GM10248 (cell line): ENCODE measurements at regions of chr4 and their contacts with region 1.

Region 1: DNA sequence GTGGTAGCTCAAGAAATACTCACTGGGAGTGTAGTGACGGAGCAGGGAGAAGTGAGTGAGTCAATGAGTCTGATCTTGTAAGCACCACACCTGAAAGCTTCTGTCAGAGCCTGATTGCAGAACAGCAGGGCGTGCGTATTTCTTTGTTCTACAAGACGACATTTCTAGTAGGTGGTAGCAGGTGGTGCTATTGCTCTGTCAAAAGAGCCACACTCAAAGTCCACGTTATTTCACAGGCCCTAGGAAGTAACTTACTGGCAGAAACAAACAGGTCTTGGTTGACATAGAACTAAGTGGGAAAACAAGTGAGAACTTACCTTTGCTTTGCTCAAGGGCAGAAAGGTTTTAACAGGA is 46.4 kb upstream of the SPRY1 start:
- DNase-seq: no peak
- CTCF ChIP-seq: no peak

Region 2: GRCh38 chr4:123319639-123320038 is 30.5 kb before region 1 on chr4:
- CTCF ChIA-PET with region 1: no interaction called
- POLR2A ChIA-PET with region 1: no interaction called
- DNase-seq: no peak
- CTCF ChIP-seq: no peak

Region 3: GRCh38 chr4:123361195-123361861 is 11.2 kb after region 1 on chr4:
- CTCF ChIA-PET with region 1: interaction called, 18 read pairs
- POLR2A ChIA-PET with region 1: no interaction called
- DNase-seq: no peak
- CTCF ChIP-seq: no peak